ENCODE measurements at regions of chr11 and their contacts with region 1.

Region 1: GRCh38 chr11:19679952-19680828 is 32.4 kb upstream of the NAV2 start:
- DNase-seq: peak in 1 of 2 donors; percentile 96
- H3K4me3 ChIP-seq: no peak overlapping the region
- H3K27ac ChIP-seq: peak overlapping the region; percentile 86
- H3K4me1 ChIP-seq: peaks cover 53% of the 10 kb centered on the region
- H3K27me3 ChIP-seq: no peaks in the 10 kb centered on the region
- CTCF ChIP-seq: peak in 1 of 3 experiments; percentile 22
- POLR2A ChIP-seq: no peak

Region 2: DNA sequence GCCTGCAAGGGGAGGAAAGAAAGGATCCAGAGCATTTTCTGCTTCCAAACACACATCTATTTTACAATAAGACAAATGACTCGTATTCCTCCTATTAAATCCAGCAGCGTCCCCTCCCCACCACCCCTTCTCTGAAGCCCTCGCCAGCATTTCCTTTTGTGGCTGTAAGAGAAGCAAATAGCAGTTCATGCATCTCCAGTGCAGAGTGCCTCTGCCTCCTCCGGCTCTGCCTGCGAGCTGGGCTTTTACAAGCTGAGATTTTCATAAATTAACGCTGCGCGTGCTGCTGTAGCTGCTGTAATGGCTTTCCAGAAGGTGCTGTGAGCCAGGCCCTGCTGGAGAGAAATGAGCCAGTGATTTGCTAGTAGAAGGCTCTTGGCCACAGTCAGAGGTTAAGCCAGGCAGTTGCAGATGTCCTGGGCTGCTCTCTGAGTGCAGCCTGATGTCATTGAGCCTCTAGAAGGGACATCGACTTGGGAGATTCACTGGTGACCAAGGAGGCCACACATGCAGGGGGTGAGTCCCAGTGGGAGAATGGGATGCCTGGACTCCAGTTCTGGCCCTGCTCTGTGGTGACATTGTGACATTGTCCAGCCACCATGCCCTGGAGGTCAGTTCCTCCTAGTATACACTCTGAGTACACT is 102.1 kb before region 1 on chr11:
- intact Hi-C with region 1: loop called (anchors 5 kb)
- DNase-seq: peak in 1 of 2 donors; percentile 95
- H3K4me3 ChIP-seq: no peak overlapping the region
- H3K27ac ChIP-seq: peak overlapping the region; percentile 92
- H3K4me1 ChIP-seq: peaks cover 28% of the 10 kb centered on the region
- H3K27me3 ChIP-seq: no peaks in the 10 kb centered on the region
- CTCF ChIP-seq: no peak
- POLR2A ChIP-seq: no peak

Region 3: GRCh38 chr11:19660076-19660475 is 20.1 kb before region 1 on chr11:
- intact Hi-C with region 1: no loop called
- DNase-seq: no peak
- H3K4me3 ChIP-seq: no peak overlapping the region
- H3K27ac ChIP-seq: no peak overlapping the region
- H3K4me1 ChIP-seq: no peaks in the 10 kb centered on the region
- H3K27me3 ChIP-seq: no peaks in the 10 kb centered on the region
- CTCF ChIP-seq: no peak
- POLR2A ChIP-seq: no peak